Left cardiac atrium (tissue), 4 donors: ENCODE measurements at regions of chr2 and their contacts with region 1.

Region 1: DNA sequence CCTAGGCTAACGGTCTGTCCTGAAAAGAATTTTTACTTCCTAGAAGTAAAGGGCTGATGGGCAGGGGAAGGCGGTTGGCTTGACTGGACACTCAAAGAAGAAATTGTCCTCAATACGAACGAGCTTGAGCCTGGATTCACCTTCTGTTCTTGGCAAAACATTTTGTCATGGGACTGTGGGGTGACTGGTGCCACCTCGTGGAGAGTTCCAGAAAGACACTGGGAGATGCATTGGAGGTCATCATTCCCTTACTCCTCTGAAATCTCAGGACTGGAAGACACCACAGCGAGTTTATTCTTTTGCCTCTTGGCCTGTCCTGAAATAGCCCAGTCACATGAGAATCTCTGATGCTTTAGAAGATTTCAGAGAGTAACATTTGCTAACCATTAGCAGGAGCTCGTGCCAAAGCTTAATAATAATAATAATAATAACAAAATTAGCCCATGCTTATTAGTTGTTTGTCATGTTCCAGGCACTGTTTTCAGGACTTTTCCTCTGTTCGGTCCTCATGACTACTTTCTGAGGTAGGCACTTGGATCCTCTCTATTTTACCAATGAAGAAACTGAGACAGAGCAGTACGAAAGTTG is 44.5 kb downstream of the TMEM182 start:
- DNase-seq: peak; percentile 60
- ATAC-seq: peak; percentile 71 to 74

Region 2: GRCh38 chr2:102753563-102754159 is 52.7 kb before region 1 on chr2:
- intact Hi-C with region 1: loop called (anchors 1 to 10 kb)
- DNase-seq: no peak
- ATAC-seq: peak in 1 of 2 donors; percentile 47

Region 3: GRCh38 chr2:103383541-103383940 is 577.2 kb after region 1 on chr2:
- intact Hi-C with region 1: no loop called
- DNase-seq: no peak
- ATAC-seq: no peak